HepG2 (cell line): ENCODE measurements at regions of chr5 and their contacts with region 1.

Region 1: DNA sequence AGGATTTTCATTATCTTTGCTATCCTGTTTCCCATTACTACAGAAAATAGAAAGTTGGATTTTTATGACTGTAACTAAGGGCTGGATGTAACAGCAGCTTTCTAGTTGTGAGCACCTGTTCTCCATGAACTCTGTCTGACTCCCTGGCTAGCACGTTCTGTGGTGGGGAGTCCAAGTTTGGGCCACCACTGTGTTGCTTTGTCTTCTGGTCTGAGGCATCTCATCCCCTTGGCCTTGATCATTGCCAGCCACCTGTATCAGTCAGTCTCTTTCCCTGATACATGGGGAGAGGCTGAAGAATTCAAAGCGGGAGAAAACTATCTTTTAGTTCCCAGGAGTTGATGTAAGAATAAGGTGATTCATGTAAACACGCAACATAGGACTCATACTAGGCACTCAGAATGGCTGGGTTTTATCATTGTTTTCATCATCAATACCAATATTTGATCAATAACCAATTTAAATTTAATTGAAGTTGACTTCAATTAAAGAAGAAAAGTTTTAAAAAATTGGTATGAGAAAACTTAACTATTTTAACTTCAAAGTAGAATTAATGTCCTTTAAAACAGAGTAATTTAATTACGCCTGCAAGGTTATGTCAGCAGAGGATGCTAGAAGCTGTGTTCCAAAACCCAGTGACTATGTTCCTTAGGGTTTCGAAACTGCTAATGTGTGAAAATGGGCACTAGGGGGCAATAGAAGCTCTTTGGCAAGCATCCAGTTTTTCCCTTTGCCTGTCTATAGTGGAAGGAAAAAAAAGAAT is 33.6 kb downstream of the WDR70 start:
- DNase-seq: peak; percentile 77
- ATAC-seq: peak; percentile 93
- H3K4me3 ChIP-seq: no peak overlapping the region
- H3K27ac ChIP-seq: no peak overlapping the region
- H3K4me1 ChIP-seq: no peaks in the 10 kb centered on the region
- H3K27me3 ChIP-seq: no peaks in the 10 kb centered on the region
- CTCF ChIP-seq: peak; percentile 82
- EP300 ChIP-seq: no peak
- POLR2A ChIP-seq: no peak
- RAD21 ChIP-seq: peak; percentile 84

Region 2: DNA sequence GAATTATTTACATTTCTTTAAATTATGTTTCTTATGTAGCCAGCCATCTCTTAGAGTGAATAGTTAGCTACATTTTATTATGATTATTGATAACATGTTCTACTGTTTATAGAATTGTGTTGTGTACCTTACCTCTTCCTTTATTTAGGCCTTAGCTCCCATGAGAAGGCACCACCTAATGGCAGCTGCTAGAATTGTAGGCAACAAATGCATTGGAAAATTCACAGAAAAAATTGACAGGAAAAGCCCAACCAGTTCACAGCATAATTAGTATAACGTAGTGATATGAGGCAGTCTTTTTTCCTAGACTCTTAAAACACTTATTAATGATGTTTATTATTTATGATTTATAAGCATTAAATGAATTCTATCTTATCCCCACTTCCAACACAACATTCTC is 142.2 kb after region 1 on chr5:
- CTCF ChIA-PET with region 1: interaction called, 12 read pairs
- POLR2A ChIA-PET with region 1: no interaction called
- in situ Hi-C with region 1: no loop called
- intact Hi-C with region 1: loop called (anchors 1 kb)
- DNase-seq: peak; percentile 25
- ATAC-seq: peak; percentile 54
- H3K4me3 ChIP-seq: no peak overlapping the region
- H3K27ac ChIP-seq: no peak overlapping the region
- H3K4me1 ChIP-seq: 0 out of 2 replicates have a peak, but pooled peaks cover 11% of the 10 kb centered on the region
- H3K27me3 ChIP-seq: no peaks in the 10 kb centered on the region
- CTCF ChIP-seq: peak; percentile 71
- EP300 ChIP-seq: no peak
- POLR2A ChIP-seq: no peak
- RAD21 ChIP-seq: 0 out of 2 replicates have a peak, but pooled peaks have one; percentile 16

Region 3: GRCh38 chr5:37717613-37718431 is 305.1 kb after region 1 on chr5:
- CTCF ChIA-PET with region 1: no interaction called
- POLR2A ChIA-PET with region 1: no interaction called
- in situ Hi-C with region 1: no loop called
- intact Hi-C with region 1: loop called (anchors 5 kb)
- DNase-seq: peak; percentile 95
- ATAC-seq: peak; percentile 98
- H3K4me3 ChIP-seq: peak overlapping the region in 2 of 3 experiments; percentile 14 to 24; a peak in 1 of 6 replicates
- H3K27ac ChIP-seq: peak overlapping the region; percentile 67
- H3K4me1 ChIP-seq: peaks cover 41% of the 10 kb centered on the region
- H3K27me3 ChIP-seq: no peaks in the 10 kb centered on the region
- CTCF ChIP-seq: no peak
- EP300 ChIP-seq: peak in 1 of 2 experiments; percentile 92; a peak in 2 of 4 replicates
- POLR2A ChIP-seq: no peak
- RAD21 ChIP-seq: no peak

Region 4: DNA sequence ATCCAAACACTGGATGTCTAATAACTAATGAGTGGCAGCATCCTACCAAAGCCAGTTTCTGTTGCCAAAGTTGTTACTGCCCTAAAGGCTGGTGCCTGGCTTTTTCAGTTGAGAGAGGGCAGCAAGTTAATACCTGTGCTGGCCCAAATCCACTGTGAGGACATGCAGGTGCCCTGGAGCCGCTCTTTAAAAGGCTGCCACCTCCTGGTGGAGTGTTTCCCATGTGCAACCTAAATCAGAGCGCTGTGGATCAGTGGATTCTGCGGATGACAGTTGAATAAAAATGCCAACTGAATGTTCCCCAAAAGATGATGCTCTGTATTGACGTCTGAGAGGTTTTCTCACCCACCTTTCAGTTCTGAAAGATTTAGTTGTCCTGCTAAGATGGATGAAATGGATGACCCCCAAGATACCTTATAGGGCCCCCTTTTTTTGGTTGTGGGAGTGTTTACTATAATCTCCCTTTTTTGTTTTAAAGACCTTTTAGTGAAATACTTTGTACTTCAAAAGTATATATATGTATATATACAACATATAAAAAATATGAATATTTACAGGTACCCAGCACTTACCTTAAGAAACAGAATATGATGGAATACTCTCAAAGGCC is 992.1 kb after region 1 on chr5:
- CTCF ChIA-PET with region 1: no interaction called
- POLR2A ChIA-PET with region 1: no interaction called
- in situ Hi-C with region 1: no loop called
- intact Hi-C with region 1: loop called (anchors 2 kb)
- DNase-seq: peak; percentile 24
- ATAC-seq: peak; percentile 83
- H3K4me3 ChIP-seq: no peak overlapping the region
- H3K27ac ChIP-seq: no peak overlapping the region
- H3K4me1 ChIP-seq: no peaks in the 10 kb centered on the region
- H3K27me3 ChIP-seq: peaks cover 0 to 14% of the 10 kb centered on the region in 2 experiments; a peak in 1 of 5 replicates
- CTCF ChIP-seq: peak; percentile 71
- EP300 ChIP-seq: no peak
- POLR2A ChIP-seq: no peak
- RAD21 ChIP-seq: peak; percentile 49; the same call in 1 of the 2 replicates